ENCODE measurements at regions of chr22 and their contacts with region 1.

Region 1: DNA sequence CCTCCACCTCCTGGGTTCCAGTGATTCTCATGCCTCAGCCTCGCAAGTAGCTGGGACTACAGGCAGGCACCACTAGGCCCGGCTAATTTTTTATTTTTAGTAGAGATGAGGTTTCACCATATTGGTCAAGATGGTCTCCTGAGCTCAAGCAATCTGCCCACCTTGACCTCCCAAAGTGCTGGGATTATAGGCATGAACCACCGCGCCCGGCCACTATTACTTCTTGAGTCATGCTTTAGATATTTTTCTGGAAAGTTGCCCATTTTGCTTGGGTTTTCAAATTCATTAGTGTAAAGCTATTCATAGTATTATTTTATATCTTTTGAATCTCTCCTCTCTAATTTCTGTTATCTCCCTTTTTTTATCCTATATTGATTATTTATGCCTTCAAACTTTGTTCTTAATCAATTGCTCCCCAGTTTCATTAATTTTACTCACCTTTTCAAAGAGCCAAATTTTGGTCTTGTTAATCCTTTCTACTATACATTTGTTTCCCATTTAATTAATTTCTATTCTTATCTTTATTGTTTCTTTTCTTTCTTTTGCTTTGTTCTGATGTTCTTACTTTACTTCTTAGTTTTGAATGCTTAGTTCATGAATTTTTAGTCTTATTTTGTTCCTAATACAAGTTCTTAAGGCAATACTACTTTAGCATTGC is 10.3 kb upstream of the RAC2 start:
- DNase-seq: no peak
- ATAC-seq: no peak
- H3K4me3 Mint-ChIP-seq: no peak overlapping the region
- H3K27ac Mint-ChIP-seq: peak overlapping the region in 3 of 10 donors; percentile 12 to 35 (median 33)
- H3K4me1 Mint-ChIP-seq: peaks cover 6 to 11% (median 9%) of the 10 kb centered on the region in 4 donors
- H3K27me3 Mint-ChIP-seq: peaks cover 0 to 1% (median 0%) of the 10 kb centered on the region in 5 donors

Region 2: GRCh38 chr22:37176218-37177091 is 77.9 kb before region 1 on chr22:
- POLR2A ChIA-PET with region 1: no interaction called
- DNase-seq: peak in 2 of 10 donors; percentile 36 to 58
- ATAC-seq: peak; percentile 63 to 78
- H3K4me3 Mint-ChIP-seq: peak overlapping the region; percentile 47 to 85 (median 80)
- H3K27ac Mint-ChIP-seq: peak overlapping the region; percentile 57 to 96 (median 90)
- H3K4me1 Mint-ChIP-seq: peaks cover 27 to 46% (median 39%) of the 10 kb centered on the region in 4 donors
- H3K27me3 Mint-ChIP-seq: no peaks in the 10 kb centered on the region

Region 3: DNA sequence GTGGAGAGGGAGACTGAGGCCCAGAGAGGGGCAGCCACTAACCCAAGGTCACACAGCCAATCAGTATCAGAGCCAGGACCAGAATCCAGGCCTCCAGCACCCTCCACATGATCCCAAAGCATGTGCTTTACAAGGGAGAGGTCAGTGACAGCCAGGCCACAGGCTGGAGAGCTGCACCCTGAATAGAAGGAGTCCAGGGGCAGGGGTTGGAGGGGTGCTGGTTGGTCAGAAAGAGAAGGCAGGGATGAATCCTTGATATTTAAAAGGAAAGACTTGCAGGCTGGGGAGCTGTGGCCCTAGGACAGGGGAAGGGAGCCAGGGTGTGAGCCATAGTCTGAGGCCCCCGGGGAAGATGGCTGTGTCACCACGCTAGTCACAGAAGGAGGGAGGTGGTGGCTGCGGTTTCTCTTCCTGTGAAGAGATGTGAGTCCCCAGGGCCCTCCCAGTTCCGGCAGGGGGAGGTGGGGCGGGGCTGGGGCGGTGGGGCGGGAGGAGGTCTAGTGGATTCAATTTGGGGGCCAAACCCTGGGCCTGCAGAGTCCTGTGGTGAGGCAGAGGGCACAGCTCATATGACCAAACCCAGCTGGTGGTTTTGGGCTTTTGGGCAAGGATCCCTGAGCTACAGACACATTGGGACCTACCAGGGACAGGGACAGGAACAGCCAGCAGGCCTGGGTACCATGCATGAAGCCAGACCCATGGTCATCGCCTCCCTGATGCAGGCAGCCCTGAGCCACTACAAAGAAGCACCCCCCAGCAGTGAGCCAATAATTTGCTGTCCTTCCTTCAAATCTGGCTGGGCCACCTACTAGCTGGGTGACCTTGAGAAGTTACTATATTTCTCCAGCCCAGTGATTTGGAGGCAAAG is 24.3 kb before region 1 on chr22:
- POLR2A ChIA-PET with region 1: interaction called, 1,090 read pairs
- DNase-seq: peak; percentile 77 to 96 (median 88)
- ATAC-seq: peak; percentile 69 to 84
- H3K4me3 Mint-ChIP-seq: peak overlapping the region; percentile 79 to 95 (median 88)
- H3K27ac Mint-ChIP-seq: peak overlapping the region; percentile 97 to 100 (median 98)
- H3K4me1 Mint-ChIP-seq: peaks cover 62 to 92% (median 90%) of the 10 kb centered on the region in 4 donors
- H3K27me3 Mint-ChIP-seq: no peaks in the 10 kb centered on the region

Region 4: GRCh38 chr22:37282385-37282677 is 28.0 kb after region 1 on chr22 and contains the start of gene CYTH4:
- POLR2A ChIA-PET with region 1: no interaction called
- DNase-seq: peak; percentile 63 to 85 (median 66)
- ATAC-seq: peak; percentile 84 to 87
- H3K4me3 Mint-ChIP-seq: peak within 1 kb of the TSS; percentile 90 to 99 (median 94)
- H3K27ac Mint-ChIP-seq: peak within 1 kb of the TSS; percentile 93 to 100 (median 98)
- H3K4me1 Mint-ChIP-seq: peaks cover 40 to 84% (median 62%) of the 10 kb centered on the region in 4 donors
- H3K27me3 Mint-ChIP-seq: no peaks in the 10 kb centered on the region
- polyA plus RNA-seq, gene CYTH4: 48.9 to 60.8 (median 54.6) TPM

Measured in naive thymus-derived CD8-positive, alpha-beta T cell (primary cell).